BJ (cell line): ENCODE measurements at regions of chr17 and their contacts with region 1.

Region 1: GRCh38 chr17:81142301-81143199 is 22.8 kb upstream of the PVALEF start:
- DNase-seq: peak; percentile 9
- H3K4me3 ChIP-seq: no peak overlapping the region
- H3K27me3 ChIP-seq: no peaks in the 10 kb centered on the region
- CTCF ChIP-seq: peak; percentile 80

Region 2: DNA sequence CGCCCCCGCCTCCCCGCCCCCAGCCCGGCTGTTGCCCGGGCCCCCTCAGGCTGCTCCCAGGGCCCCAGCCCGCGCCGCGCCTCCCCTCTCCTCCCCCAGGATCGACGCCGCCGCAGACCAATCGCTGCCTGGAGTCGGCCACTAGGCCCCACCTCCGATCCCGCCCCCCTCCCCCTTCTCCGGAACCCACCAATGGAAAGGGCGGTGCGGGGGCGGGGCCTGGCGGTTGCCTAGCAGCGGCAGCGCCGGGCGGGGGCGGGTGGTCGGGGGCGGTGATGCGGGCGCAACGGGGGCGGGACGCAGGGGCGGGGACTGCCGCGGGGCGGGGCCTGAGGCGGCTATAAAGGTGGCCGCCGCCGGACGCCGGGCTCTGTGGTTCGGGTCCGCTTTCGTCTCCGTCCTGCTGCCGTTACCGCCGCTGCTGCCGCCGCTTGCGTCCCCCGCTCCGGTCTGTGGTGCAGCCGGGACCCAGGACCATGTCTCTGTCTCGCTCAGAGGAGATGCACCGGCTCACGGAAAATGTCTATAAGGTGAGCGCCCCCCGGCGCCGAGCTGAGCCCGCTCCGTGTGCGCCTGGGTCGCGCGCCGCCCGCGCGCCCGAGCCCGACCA is 107.7 kb before region 1 on chr17 and contains the start of gene BAIAP2:
- CTCF ChIA-PET with region 1: no interaction called
- POLR2A ChIA-PET with region 1: no interaction called
- DNase-seq: no peak
- H3K4me3 ChIP-seq: peak within 1 kb of the TSS; percentile 75
- H3K27me3 ChIP-seq: no peaks in the 10 kb centered on the region
- CTCF ChIP-seq: no peak
- polyA plus RNA-seq, gene BAIAP2: 7.8 and 12.1 TPM in 2 replicates

Region 3: GRCh38 chr17:81064678-81065475 is 77.7 kb before region 1 on chr17:
- CTCF ChIA-PET with region 1: no interaction called
- POLR2A ChIA-PET with region 1: no interaction called
- DNase-seq: no peak
- H3K4me3 ChIP-seq: no peak overlapping the region
- H3K27me3 ChIP-seq: no peaks in the 10 kb centered on the region
- CTCF ChIP-seq: no peak

Region 4: GRCh38 chr17:81153340-81153803 is 10.8 kb after region 1 on chr17:
- CTCF ChIA-PET with region 1: interaction called, 30 read pairs
- POLR2A ChIA-PET with region 1: no interaction called
- DNase-seq: no peak
- H3K4me3 ChIP-seq: no peak overlapping the region
- H3K27me3 ChIP-seq: 0 out of 2 replicates have a peak, but pooled peaks cover 4% of the 10 kb centered on the region
- CTCF ChIP-seq: no peak